ENCODE measurements at regions of chr2 and their contacts with region 1.

Region 1: DNA sequence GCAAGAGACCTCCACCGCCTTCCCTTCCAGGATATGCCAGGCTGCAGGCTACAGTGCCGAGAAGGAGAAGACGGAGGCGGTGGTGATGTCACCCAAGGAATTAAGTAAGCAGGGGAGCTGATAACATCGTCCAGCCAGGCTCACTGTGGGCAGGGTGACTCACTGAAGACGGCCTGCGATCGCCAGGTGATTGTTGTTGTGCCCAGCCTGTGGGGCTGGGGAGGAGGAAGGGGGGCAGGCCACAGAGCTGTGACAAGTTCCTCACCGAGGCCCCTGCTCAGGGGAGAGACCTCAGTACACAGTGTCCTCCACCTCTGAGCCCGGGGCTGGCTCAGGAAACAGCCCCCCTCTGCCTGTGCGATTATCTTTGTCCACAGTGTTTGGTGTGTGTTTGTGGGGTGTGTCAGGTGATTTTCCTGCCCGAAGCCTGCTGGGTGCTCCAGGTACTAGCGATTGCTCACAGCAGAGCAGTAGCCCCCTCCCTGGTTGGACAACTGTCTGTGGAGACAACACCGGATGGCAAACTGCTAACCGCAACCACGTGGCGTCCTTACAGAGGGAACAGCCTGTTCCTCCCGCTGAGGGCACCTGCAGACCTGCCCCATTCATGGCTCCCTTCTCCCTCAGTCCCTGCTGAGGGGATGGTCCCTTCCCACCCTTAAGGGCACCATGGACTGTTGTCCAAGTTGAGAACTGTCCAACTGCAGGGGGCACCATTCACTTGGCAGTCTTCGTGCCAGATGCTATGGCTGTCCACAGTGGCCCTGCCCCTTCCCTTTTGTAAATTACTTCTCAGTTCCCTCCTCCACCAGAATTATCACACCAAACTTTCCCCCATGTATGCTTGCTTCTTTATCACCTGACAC is 95.1 kb downstream of the ZFP36L2 start:
- DNase-seq: peak; percentile 73
- H3K4me3 Mint-ChIP-seq: peak overlapping the region; percentile 45
- H3K27ac Mint-ChIP-seq: peak overlapping the region; percentile 83
- H3K4me1 Mint-ChIP-seq: peaks cover 83% of the 10 kb centered on the region
- H3K27me3 Mint-ChIP-seq: no peaks in the 10 kb centered on the region

Region 2: DNA sequence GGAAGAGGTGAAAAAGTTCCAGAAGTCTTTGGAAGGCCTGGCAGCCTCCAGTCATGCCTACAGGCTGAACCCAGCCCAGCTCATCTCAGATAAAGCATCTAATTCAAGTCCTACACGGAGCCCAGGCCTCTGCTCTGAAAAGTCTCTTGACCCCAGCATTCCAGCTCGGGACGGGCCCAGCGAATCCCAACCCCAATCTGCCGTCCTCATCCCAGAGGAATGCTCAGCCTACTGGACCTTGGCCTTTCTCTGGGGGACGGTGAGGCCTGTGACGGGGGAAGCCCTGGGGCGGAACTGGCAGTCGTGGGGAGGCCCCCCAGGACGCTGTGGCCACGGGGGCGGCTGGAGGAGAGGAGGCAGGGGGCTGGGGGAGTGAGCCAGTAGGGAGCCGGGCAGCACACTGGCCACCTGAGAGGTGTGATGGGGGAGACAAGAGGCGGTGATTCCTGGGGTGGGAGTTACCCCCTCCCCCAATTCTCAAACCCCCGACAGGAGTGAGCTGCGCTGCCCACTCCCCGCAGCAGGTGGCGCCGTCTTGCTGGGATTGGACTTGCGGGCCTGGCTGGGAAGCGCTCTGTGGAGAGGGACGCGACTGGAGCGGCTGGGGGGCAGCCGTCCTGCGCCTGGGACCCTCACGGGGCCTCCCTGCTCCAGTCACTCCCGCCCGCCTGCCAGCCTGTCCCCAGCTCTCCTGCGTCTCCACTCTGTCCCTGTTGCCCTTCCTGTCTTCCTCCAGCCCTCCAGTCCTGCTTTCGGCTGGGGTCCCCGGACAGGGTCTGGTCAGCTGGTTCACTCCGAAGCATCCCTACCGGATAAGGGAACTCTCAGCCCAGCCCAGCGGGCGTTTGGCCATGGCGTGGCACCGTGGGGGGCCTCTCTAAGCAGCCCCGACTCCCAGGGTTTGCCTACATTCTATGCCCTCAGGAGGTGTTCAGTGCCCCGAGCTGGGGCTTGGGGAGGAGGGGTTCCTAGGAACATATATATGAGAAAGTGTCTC is 156.2 kb before region 1 on chr2:
- intact Hi-C with region 1: loop called (anchors 5 kb)
- DNase-seq: peak; percentile 19
- H3K4me3 Mint-ChIP-seq: no peak overlapping the region
- H3K27ac Mint-ChIP-seq: no peak overlapping the region
- H3K4me1 Mint-ChIP-seq: peaks cover 11% of the 10 kb centered on the region
- H3K27me3 Mint-ChIP-seq: peaks cover 6% of the 10 kb centered on the region

Region 3: DNA sequence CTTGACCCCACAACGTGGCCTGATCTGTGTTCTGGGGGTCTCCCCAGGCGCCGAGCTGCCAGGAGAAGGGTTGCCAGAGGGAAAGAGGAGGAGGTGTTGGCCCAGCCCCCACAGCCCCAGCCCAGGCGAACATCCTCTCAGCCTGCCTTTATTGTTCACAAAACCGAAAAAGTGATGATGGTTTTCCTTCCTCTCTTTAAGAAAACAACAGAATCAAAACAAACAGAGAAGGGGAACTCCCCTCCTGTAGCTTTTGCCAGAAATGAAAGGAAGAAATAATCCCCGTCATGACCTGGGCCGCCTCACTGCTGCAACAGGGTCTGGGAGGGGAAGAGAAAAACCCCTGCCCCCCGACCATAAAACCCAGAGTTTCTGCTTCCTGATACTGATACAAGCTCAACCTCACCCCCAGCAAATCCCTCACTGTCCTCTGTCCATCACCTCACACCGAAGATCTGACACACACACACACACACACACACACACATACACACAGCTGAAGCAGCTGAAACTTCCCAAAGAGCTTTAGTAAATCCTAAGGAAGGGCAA is 43.2 kb after region 1 on chr2:
- intact Hi-C with region 1: loop called (anchors 1 kb)
- DNase-seq: peak; percentile 76
- H3K4me3 Mint-ChIP-seq: peak overlapping the region; percentile 32
- H3K27ac Mint-ChIP-seq: peak overlapping the region; percentile 89
- H3K4me1 Mint-ChIP-seq: peaks cover 75% of the 10 kb centered on the region
- H3K27me3 Mint-ChIP-seq: no peaks in the 10 kb centered on the region

Region 4: GRCh38 chr2:43293744-43294695 is 162.8 kb after region 1 on chr2:
- intact Hi-C with region 1: loop called (anchors 2 kb)
- DNase-seq: peak; percentile 66
- H3K4me3 Mint-ChIP-seq: peak overlapping the region; percentile 35
- H3K27ac Mint-ChIP-seq: peak overlapping the region; percentile 77
- H3K4me1 Mint-ChIP-seq: peaks cover 34% of the 10 kb centered on the region
- H3K27me3 Mint-ChIP-seq: no peaks in the 10 kb centered on the region

Region 5: GRCh38 chr2:43484323-43484930 is 353.2 kb after region 1 on chr2:
- intact Hi-C with region 1: loop called (anchors 1 kb)
- DNase-seq: no peak
- H3K4me3 Mint-ChIP-seq: no peak overlapping the region
- H3K27ac Mint-ChIP-seq: no peak overlapping the region
- H3K4me1 Mint-ChIP-seq: peaks cover 7% of the 10 kb centered on the region
- H3K27me3 Mint-ChIP-seq: no peaks in the 10 kb centered on the region

Measured in activated T-helper 1 cell treated with anti-CD3 and anti-CD28 coated beads, Interleukin-12 subunit alpha, Interleukin-12 subunit beta, Interleukin-2, Interleukin-4 antibody, amounts not matched to agents 30 ng/mL and 10 ng/mL and 1 ng/mL, durations not matched to agents 14 hours and 24 hours and 36 hours (primary cell).